ENCODE measurements at regions of chr3 and their contacts with region 1.

Region 1: DNA sequence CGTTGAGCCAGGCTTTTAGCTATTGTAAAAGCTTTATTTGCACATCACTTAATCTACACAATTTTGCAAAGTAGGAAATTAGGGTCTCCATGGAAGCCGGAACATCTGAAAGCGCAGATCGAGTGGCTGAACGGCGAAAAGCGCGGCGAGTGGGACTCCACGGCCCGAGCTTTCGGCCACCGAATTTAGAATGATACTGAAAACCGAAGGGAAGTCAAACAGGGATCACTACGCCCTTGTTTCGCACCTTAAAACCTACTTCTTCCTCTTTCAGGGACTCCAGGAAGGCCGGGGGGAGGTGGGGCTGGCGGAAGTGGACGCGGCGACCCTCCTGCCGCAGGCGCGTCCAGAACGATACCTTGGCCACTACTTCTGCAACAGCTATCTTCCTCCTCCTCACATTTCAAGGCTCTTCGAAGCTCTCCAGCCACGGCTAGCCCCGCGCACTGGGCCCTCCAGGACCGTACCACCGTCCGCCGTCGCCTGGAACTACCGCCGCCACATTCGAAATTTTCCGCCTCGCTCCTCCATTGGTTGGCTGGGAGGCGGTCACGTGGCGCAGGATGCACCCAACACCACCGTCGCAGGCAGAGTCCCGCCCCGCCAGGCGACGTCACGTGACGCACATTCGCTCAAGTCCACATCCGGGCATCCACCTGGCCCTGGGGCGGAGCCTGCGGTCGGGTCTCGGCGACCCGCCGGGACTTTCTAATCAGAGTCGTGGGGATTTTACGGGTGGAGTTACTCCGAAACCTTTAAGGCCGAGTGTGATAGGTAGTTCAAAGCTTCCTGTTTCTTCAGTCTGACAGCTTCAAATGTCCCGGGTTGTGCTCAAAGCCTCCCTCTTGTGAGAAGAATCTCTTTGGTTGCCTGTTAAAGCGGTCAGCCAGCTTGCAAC is at the start of gene SGO1:
- DNase-seq: peak; percentile 98
- H3K4me3 ChIP-seq: peak within 1 kb of the TSS; percentile 90 to 93 (median 91)
- H3K27ac ChIP-seq: peak within 1 kb of the TSS; percentile 85
- H3K4me1 ChIP-seq: peaks cover 21% of the 10 kb centered on the region
- H3K27me3 ChIP-seq: no peaks in the 10 kb centered on the region
- CTCF ChIP-seq: no peak
- POLR2A ChIP-seq: peak; percentile 91
- total RNA-seq, gene SGO1: 15.5 and 21.7 TPM in 2 replicates

Region 2: GRCh38 chr3:20256144-20256543 is 70.2 kb after region 1 on chr3:
- CTCF ChIA-PET with region 1: no interaction called
- POLR2A ChIA-PET with region 1: no interaction called
- dilution Hi-C with region 1: no loop called
- intact Hi-C with region 1: loop called (anchors 1 kb)
- DNase-seq: peak; percentile 92
- H3K4me3 ChIP-seq: peak overlapping the region in 1 of 3 experiments; percentile 11
- H3K27ac ChIP-seq: peak overlapping the region; percentile 83
- H3K4me1 ChIP-seq: peaks cover 18% of the 10 kb centered on the region
- H3K27me3 ChIP-seq: no peaks in the 10 kb centered on the region
- CTCF ChIP-seq: no peak
- POLR2A ChIP-seq: no peak

Region 3: DNA sequence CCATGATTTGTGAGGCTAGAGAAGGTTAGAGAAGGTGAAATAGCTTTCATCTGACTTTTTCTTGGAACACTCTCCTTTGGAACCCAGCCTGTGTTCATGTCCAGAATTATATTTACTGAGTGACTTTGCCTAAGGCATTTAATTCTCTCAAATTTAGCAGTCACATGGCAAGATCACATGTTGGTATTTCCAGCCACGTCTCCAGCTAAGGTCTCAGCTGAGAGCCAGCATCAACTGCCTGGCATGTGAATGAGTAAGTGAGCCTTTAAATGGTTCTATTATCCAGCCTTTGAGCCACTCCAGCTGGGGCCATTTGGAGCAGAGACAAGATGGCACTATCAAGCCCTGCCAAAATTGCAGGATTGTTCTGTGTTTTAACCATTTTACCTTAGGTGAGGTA is 130.3 kb after region 1 on chr3:
- CTCF ChIA-PET with region 1: no interaction called
- POLR2A ChIA-PET with region 1: no interaction called
- dilution Hi-C with region 1: no loop called
- intact Hi-C with region 1: no loop called
- DNase-seq: no peak
- H3K4me3 ChIP-seq: no peak overlapping the region
- H3K27ac ChIP-seq: no peak overlapping the region
- H3K4me1 ChIP-seq: no peaks in the 10 kb centered on the region
- H3K27me3 ChIP-seq: no peaks in the 10 kb centered on the region
- CTCF ChIP-seq: no peak
- POLR2A ChIP-seq: no peak

Region 4: GRCh38 chr3:21534462-21534861 is 1348.5 kb after region 1 on chr3:
- CTCF ChIA-PET with region 1: no interaction called
- POLR2A ChIA-PET with region 1: no interaction called
- dilution Hi-C with region 1: no loop called
- intact Hi-C with region 1: no loop called
- DNase-seq: no peak
- H3K4me3 ChIP-seq: no peak overlapping the region
- H3K27ac ChIP-seq: no peak overlapping the region
- H3K4me1 ChIP-seq: no peaks in the 10 kb centered on the region
- H3K27me3 ChIP-seq: no peaks in the 10 kb centered on the region
- CTCF ChIP-seq: no peak
- POLR2A ChIP-seq: no peak

Region 5: GRCh38 chr3:21672303-21672702 is 1486.4 kb after region 1 on chr3:
- CTCF ChIA-PET with region 1: no interaction called
- POLR2A ChIA-PET with region 1: no interaction called
- dilution Hi-C with region 1: no loop called
- intact Hi-C with region 1: loop called (anchors 1 kb)
- DNase-seq: peak; percentile 83
- H3K4me3 ChIP-seq: no peak overlapping the region
- H3K27ac ChIP-seq: peak overlapping the region; percentile 56
- H3K4me1 ChIP-seq: peaks cover 22% of the 10 kb centered on the region
- H3K27me3 ChIP-seq: no peaks in the 10 kb centered on the region
- CTCF ChIP-seq: no peak
- POLR2A ChIP-seq: no peak

Measured in endothelial cell of umbilical vein (primary cell).